Aorta (tissue), 5 donors: ENCODE measurements at regions of chr12 and their contacts with region 1.

Region 1: GRCh38 chr12:31773867-31774266 is 45.0 kb upstream of the AMN1 start:
- DNase-seq: no peak
- ATAC-seq: no peak
- H3K4me3 ChIP-seq: no peak overlapping the region
- H3K27ac ChIP-seq: no peak overlapping the region
- H3K4me1 ChIP-seq: no peaks in the 10 kb centered on the region
- H3K27me3 ChIP-seq: no peaks in the 10 kb centered on the region

Region 2: GRCh38 chr12:31518680-31519227 is 255.1 kb before region 1 on chr12:
- intact Hi-C with region 1: no loop called
- DNase-seq: no peak
- ATAC-seq: peak; percentile 52
- H3K4me3 ChIP-seq: peak overlapping the region in 1 of 2 donors; percentile 26
- H3K27ac ChIP-seq: no peak overlapping the region
- H3K4me1 ChIP-seq: peaks cover 2 to 6% of the 10 kb centered on the region in 2 donors
- H3K27me3 ChIP-seq: no peaks in the 10 kb centered on the region

Region 3: GRCh38 chr12:31682136-31682962 is 91.5 kb before region 1 on chr12:
- intact Hi-C with region 1: loop called in 1 of 2 experiments (anchors 10 kb)
- DNase-seq: peak in 1 of 2 donors; percentile 69
- ATAC-seq: peak; percentile 48
- H3K4me3 ChIP-seq: no peak overlapping the region
- H3K27ac ChIP-seq: no peak overlapping the region
- H3K4me1 ChIP-seq: no peaks in the 10 kb centered on the region
- H3K27me3 ChIP-seq: no peaks in the 10 kb centered on the region

Region 4: DNA sequence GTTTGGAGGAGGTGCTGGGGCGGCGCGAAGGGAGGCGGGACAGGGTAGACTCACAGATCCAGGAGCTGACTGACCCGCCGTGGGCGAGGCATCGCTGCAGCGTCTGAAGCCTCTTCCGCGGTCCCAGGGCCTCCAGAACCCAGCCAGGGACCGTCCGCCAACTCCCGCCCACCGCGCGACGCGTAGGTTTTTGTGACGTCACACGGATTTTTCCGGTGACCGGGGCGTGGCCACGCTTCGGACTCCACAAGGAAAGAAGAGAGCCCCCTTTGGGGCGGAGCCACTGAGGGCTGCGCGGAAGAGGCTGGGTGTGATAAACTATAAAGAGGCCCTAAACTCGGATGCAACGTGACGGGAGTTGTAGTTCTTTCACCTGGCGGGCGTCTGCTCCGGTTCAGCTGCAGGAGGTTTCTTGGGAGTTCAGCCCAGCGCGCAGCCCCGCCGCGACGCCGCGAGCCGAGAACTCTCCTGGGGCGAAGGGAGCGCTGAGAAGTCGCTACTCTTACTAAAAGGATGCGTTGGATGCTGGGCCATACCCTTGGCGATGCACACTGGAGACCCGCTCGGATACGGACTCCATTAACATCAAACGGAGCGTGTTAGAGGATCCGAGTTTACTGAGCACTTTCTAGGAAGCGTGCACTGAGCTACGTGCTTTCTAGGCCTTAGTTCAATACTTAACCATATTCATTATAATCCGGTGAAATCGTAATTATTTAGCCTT is 44.8 kb before region 1 on chr12 and contains the start of gene AMN1:
- intact Hi-C with region 1: no loop called
- DNase-seq: peak; percentile 99 to 100
- ATAC-seq: peak; percentile 98
- H3K4me3 ChIP-seq: peak within 1 kb of the TSS; percentile 79 to 88
- H3K27ac ChIP-seq: peak within 1 kb of the TSS; percentile 95 to 96
- H3K4me1 ChIP-seq: peaks cover 0 to 5% of the 10 kb centered on the region in 2 donors
- H3K27me3 ChIP-seq: no peaks in the 10 kb centered on the region
- total RNA-seq, gene AMN1: 11.7 to 12.4 TPM

Region 5: GRCh38 chr12:32379213-32379612 is 605.3 kb after region 1 on chr12:
- intact Hi-C with region 1: no loop called
- DNase-seq: no peak
- ATAC-seq: no peak
- H3K4me3 ChIP-seq: no peak overlapping the region
- H3K27ac ChIP-seq: no peak overlapping the region
- H3K4me1 ChIP-seq: no peaks in the 10 kb centered on the region
- H3K27me3 ChIP-seq: no peaks in the 10 kb centered on the region